Ovary (tissue), 10 donors: ENCODE measurements at regions of chr6 and their contacts with region 1.

Region 1: DNA sequence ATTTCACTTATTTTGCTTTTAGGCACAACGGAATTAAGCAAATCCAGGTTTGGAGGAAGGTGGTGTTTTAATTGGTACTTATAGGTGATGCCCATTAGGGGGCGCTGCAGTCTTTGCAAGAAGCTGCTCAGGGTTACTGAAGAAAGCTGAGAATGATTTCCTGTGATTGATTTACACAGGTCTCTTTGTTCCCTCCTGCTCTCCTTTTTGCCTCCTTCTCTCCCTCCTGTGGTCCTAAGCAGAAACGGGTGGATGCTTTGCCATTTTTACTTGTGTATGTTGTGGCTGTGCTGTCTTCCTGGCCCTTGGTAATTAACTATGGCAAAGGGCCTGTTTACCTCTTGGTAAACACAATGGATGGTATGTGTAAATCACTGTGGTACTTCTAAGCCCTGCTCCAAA is 97.8 kb downstream of the ANKS1A start:
- DNase-seq: peak; percentile 55 to 74 (median 63)
- H3K4me3 ChIP-seq: no peak overlapping the region
- H3K27ac ChIP-seq: no peak overlapping the region
- H3K4me1 ChIP-seq: no peaks in the 10 kb centered on the region
- H3K27me3 ChIP-seq: no peaks in the 10 kb centered on the region
- CTCF ChIP-seq: peak; percentile 67 to 81 (median 73)
- EP300 ChIP-seq: no peak
- POLR2A ChIP-seq: no peak

Region 2: GRCh38 chr6:34810936-34811632 is 175.8 kb before region 1 on chr6:
- intact Hi-C with region 1: no loop called
- DNase-seq: no peak
- H3K4me3 ChIP-seq: no peak overlapping the region
- H3K27ac ChIP-seq: no peak overlapping the region
- H3K4me1 ChIP-seq: no peaks in the 10 kb centered on the region
- H3K27me3 ChIP-seq: no peaks in the 10 kb centered on the region
- CTCF ChIP-seq: no peak
- EP300 ChIP-seq: no peak
- POLR2A ChIP-seq: no peak

Region 3: GRCh38 chr6:34887753-34888513 is 98.9 kb before region 1 on chr6 and contains the start of gene TAF11:
- intact Hi-C with region 1: loop called in 1 of 4 experiments (anchors 10 kb)
- DNase-seq: peak; percentile 92 to 95 (median 93)
- H3K4me3 ChIP-seq: peak within 1 kb of the TSS; percentile 88
- H3K27ac ChIP-seq: peak within 1 kb of the TSS; percentile 75 to 79
- H3K4me1 ChIP-seq: peaks cover 5% of the 10 kb centered on the region
- H3K27me3 ChIP-seq: no peaks in the 10 kb centered on the region
- CTCF ChIP-seq: no peak
- EP300 ChIP-seq: no peak
- POLR2A ChIP-seq: peak; percentile 83
- total RNA-seq, gene TAF11: 16.0 to 25.0 (median 19.1) TPM

Region 4: GRCh38 chr6:35139908-35140655 is 153.2 kb after region 1 on chr6:
- intact Hi-C with region 1: loop called in 3 of 4 experiments (anchors 5 to 10 kb)
- DNase-seq: peak; percentile 53 to 71 (median 66)
- H3K4me3 ChIP-seq: no peak overlapping the region
- H3K27ac ChIP-seq: peak overlapping the region in 1 of 2 donors; percentile 51
- H3K4me1 ChIP-seq: peaks cover 2% of the 10 kb centered on the region
- H3K27me3 ChIP-seq: no peaks in the 10 kb centered on the region
- CTCF ChIP-seq: peak; percentile 82 to 89 (median 84)
- EP300 ChIP-seq: no peak
- POLR2A ChIP-seq: no peak

Region 5: GRCh38 chr6:35202066-35202546 is 215.3 kb after region 1 on chr6:
- intact Hi-C with region 1: loop called in 1 of 4 experiments (anchors 10 kb)
- DNase-seq: no peak
- H3K4me3 ChIP-seq: no peak overlapping the region
- H3K27ac ChIP-seq: no peak overlapping the region
- H3K4me1 ChIP-seq: no peaks in the 10 kb centered on the region
- H3K27me3 ChIP-seq: no peaks in the 10 kb centered on the region
- CTCF ChIP-seq: no peak
- EP300 ChIP-seq: no peak
- POLR2A ChIP-seq: no peak

Region 6: DNA sequence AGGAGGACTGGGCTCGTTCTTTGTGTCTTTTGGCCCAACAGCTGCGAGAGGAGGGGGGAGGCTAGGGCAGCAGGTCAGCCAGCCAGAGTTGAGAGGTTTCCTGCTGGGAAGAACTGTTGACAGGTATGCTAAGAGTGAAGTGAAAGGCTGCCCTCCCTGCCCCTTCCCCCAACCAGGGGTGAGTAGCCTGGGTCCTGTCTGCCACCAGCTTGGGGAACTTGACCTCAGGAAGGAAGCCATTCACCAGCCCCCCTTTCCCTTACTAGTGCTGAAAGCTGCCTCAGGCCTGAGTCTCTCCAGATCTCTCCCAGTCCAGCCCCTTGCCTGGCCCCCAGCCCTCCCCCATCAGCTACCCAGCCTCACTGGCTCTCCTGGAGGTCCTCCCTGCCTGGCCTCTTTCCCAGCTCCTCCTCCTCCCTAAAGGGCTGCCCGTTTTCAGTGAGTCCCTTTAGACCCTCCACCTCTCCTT is 252.0 kb after region 1 on chr6:
- intact Hi-C with region 1: loop called in 1 of 4 experiments (anchors 10 kb)
- DNase-seq: peak in 2 of 5 donors; percentile 42 to 45
- H3K4me3 ChIP-seq: no peak overlapping the region
- H3K27ac ChIP-seq: no peak overlapping the region
- H3K4me1 ChIP-seq: no peaks in the 10 kb centered on the region
- H3K27me3 ChIP-seq: no peaks in the 10 kb centered on the region
- CTCF ChIP-seq: no peak
- EP300 ChIP-seq: no peak
- POLR2A ChIP-seq: no peak